ENCODE measurements at regions of chr5 and their contacts with region 1.

Region 1: GRCh38 chr5:78537821-78538220 is 110.8 kb downstream of the LHFPL2 start:
- DNase-seq: peak in 1 of 2 experiments; percentile 15
- H3K4me3 ChIP-seq: no peak overlapping the region
- H3K27ac ChIP-seq: no peak overlapping the region
- H3K4me1 ChIP-seq: no peaks in the 10 kb centered on the region
- H3K27me3 ChIP-seq: no peaks in the 10 kb centered on the region
- CTCF ChIP-seq: peak; percentile 52

Region 2: DNA sequence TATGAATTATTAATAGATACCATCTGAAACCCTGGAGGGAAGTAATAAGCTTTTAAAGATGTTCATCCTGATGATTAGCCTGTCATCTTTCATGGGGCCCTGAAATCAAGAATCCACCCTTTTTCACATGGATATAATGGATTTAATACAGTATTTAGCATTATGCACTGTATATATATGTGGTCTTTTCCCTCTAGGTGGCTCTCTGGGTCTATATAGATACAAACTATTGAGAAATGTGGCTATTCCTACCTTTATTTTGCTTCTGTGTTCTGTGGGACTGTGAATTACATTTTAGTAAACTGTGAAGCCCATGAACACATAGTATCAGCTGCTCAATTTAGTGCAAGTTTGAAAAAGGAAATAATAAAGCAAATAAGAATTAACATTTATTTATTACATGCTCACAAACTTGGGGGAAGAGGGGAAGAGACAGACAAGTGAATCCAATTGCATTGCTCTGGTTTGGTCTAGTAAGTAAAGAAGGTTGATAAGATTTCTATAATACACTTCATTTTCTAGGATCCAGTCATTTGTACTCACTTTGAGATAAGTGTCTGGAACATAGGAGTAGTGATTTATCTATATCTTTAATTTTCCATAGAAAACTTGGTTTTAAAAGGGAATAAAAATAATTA is 65.2 kb before region 1 on chr5:
- CTCF ChIA-PET with region 1: interaction called, 7 read pairs
- POLR2A ChIA-PET with region 1: no interaction called
- intact Hi-C with region 1: loop called (anchors 2 kb)
- DNase-seq: no peak
- H3K4me3 ChIP-seq: no peak overlapping the region
- H3K27ac ChIP-seq: no peak overlapping the region
- H3K4me1 ChIP-seq: no peaks in the 10 kb centered on the region
- H3K27me3 ChIP-seq: no peaks in the 10 kb centered on the region
- CTCF ChIP-seq: peak; percentile 66

Region 3: GRCh38 chr5:78490709-78491485 is 46.9 kb before region 1 on chr5:
- CTCF ChIA-PET with region 1: no interaction called
- POLR2A ChIA-PET with region 1: no interaction called
- intact Hi-C with region 1: loop called (anchors 5 kb)
- DNase-seq: peak in 1 of 2 experiments; percentile 86
- H3K4me3 ChIP-seq: no peak overlapping the region
- H3K27ac ChIP-seq: peak overlapping the region; percentile 75
- H3K4me1 ChIP-seq: peaks cover 23% of the 10 kb centered on the region
- H3K27me3 ChIP-seq: no peaks in the 10 kb centered on the region
- CTCF ChIP-seq: no peak